GM12878 (cell line): ENCODE measurements at regions of chr12 and their contacts with region 1.

Region 1: GRCh38 chr12:76031537-76032073 is at the start of gene PHLDA1:
- DNase-seq: peak; percentile 79
- ATAC-seq: peak; percentile 84
- H3K4me3 ChIP-seq: peak within 1 kb of the TSS; percentile 85
- H3K27ac ChIP-seq: peak within 1 kb of the TSS; percentile 75
- H3K4me1 ChIP-seq: peaks cover 17% of the 10 kb centered on the region
- H3K27me3 ChIP-seq: no peaks in the 10 kb centered on the region; a peak in 1 of 4 replicates
- CTCF ChIP-seq: peak; percentile 57 to 89 (median 72)
- EP300 ChIP-seq: peak in 1 of 2 experiments; percentile 60; a peak in 1 of 4 replicates
- POLR2A ChIP-seq: peak; percentile 94
- RAD21 ChIP-seq: peak; percentile 81
- polyA plus RNA-seq, gene PHLDA1: 0.66 to 0.87 TPM

Region 2: GRCh38 chr12:75526655-75527511 is 504.7 kb before region 1 on chr12:
- CTCF ChIA-PET with region 1: interaction called, 144 read pairs
- POLR2A ChIA-PET with region 1: interaction called, 23 read pairs
- RAD21 ChIA-PET with region 1: interaction called, 144 read pairs
- SMC1A ChIA-PET with region 1: interaction called, 268 read pairs
- in situ Hi-C with region 1: loop called (anchors 5 kb)
- intact Hi-C with region 1: loop called (anchors 1 kb)
- DNase-seq: peak; percentile 54
- ATAC-seq: peak; percentile 98
- H3K4me3 ChIP-seq: no peak overlapping the region
- H3K27ac ChIP-seq: no peak overlapping the region
- H3K4me1 ChIP-seq: no peaks in the 10 kb centered on the region; the same call in 1 of the 2 replicates
- H3K27me3 ChIP-seq: no peaks in the 10 kb centered on the region
- CTCF ChIP-seq: peak; percentile 53 to 73 (median 62); a peak in 5 of 6 replicates
- EP300 ChIP-seq: peak; percentile 36 to 58; a peak in 1 of 4 replicates
- POLR2A ChIP-seq: no peak
- RAD21 ChIP-seq: peak; percentile 82

Region 3: DNA sequence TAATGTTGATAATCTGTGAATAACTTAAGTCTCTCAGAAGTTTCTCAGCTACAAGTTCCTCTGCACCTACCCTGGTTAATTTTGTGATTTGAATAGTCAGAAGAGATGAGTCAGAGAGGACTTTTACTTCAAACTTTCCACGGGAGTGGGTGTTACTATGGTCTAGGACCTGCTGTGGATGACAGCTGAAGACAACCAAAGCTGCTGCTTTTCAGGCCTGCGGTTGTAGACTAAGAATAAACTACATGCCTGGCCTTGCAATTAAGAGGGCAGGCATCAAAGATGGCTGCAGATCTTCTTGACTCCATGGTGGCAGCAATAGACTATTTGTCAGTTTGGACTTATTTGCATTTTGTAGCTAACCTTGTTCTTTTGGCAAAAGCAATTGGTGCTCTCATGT is 293.1 kb before region 1 on chr12:
- CTCF ChIA-PET with region 1: no interaction called
- POLR2A ChIA-PET with region 1: interaction called, 3 read pairs
- RAD21 ChIA-PET with region 1: interaction called, 14 read pairs
- SMC1A ChIA-PET with region 1: interaction called, 5 read pairs
- in situ Hi-C with region 1: no loop called
- intact Hi-C with region 1: no loop called
- DNase-seq: peak; percentile 16
- ATAC-seq: peak; percentile 96
- H3K4me3 ChIP-seq: no peak overlapping the region
- H3K27ac ChIP-seq: no peak overlapping the region
- H3K4me1 ChIP-seq: no peaks in the 10 kb centered on the region
- H3K27me3 ChIP-seq: no peaks in the 10 kb centered on the region
- CTCF ChIP-seq: no peak
- EP300 ChIP-seq: 0 out of 4 replicates have a peak, but pooled peaks have one; percentile 13 to 36
- POLR2A ChIP-seq: no peak
- RAD21 ChIP-seq: no peak

Region 4: GRCh38 chr12:75837700-75838099 is 193.9 kb before region 1 on chr12:
- CTCF ChIA-PET with region 1: interaction called, 3 read pairs
- POLR2A ChIA-PET with region 1: interaction called, 3 read pairs
- RAD21 ChIA-PET with region 1: interaction called, 3 read pairs
- SMC1A ChIA-PET with region 1: interaction called, 3 read pairs
- in situ Hi-C with region 1: no loop called
- intact Hi-C with region 1: loop called (anchors 5 kb)
- DNase-seq: no peak
- ATAC-seq: peak; percentile 26; the same call in 1 of the 3 replicates
- H3K4me3 ChIP-seq: no peak overlapping the region
- H3K27ac ChIP-seq: no peak overlapping the region
- H3K4me1 ChIP-seq: no peaks in the 10 kb centered on the region
- H3K27me3 ChIP-seq: no peaks in the 10 kb centered on the region
- CTCF ChIP-seq: no peak
- EP300 ChIP-seq: no peak
- POLR2A ChIP-seq: no peak
- RAD21 ChIP-seq: no peak

Region 5: GRCh38 chr12:75944097-75944904 is 87.3 kb before region 1 on chr12:
- CTCF ChIA-PET with region 1: interaction called, 5 read pairs
- POLR2A ChIA-PET with region 1: interaction called, 3 read pairs
- RAD21 ChIA-PET with region 1: interaction called, 6 read pairs
- SMC1A ChIA-PET with region 1: interaction called, 5 read pairs
- in situ Hi-C with region 1: no loop called
- intact Hi-C with region 1: loop called (anchors 2 kb)
- DNase-seq: peak; percentile 54
- ATAC-seq: peak; percentile 92
- H3K4me3 ChIP-seq: no peak overlapping the region
- H3K27ac ChIP-seq: peak overlapping the region; percentile 37
- H3K4me1 ChIP-seq: peaks cover 18% of the 10 kb centered on the region
- H3K27me3 ChIP-seq: no peaks in the 10 kb centered on the region
- CTCF ChIP-seq: no peak
- EP300 ChIP-seq: 0 out of 4 replicates have a peak, but pooled peaks of 1 of the 2 experiments have one; percentile 24
- POLR2A ChIP-seq: no peak
- RAD21 ChIP-seq: no peak

Region 6: DNA sequence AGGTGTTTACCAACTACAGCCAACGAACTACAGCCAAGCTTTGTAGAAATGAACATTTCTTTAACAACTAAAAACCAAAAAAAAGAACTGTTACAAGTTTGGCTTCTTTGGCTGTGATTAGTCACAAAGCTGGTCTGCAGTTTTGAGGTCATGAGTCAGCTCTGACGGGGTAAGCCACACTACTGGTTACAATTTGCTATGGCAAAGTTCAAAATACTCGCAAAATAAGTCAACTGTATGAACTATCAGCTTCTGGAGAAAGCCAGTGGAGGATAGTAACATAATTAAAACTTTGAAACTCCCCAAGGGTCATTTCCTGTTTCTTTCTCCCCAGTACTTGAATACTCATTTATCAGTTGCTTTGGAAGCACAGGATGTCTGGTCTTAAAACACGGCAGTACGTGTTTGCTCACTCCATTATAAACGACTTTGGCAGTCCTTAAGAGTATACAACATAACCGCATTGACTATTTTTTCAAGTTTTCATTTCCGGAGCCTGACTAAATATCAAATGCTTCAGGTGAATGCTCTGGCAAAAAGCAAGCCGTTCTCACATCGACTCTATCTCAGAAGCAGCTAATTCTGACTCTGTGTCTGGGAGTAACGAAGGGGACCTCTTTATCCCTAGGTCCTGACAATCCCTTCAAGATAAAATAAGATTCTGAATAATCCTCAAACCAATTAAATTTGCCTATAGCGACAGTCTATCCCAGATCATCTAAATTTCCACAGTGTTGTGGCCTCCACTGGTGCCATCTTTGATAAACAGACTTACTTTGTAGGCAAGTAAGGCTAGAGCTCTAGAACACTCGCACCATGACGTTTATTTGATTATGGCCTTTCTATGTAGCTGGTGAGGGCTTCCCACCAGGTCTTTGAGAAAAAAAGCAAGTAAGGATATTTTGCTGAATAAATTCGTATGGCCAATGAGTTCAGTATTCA is 10.6 kb before region 1 on chr12:
- CTCF ChIA-PET with region 1: interaction called, 9 read pairs
- POLR2A ChIA-PET with region 1: interaction called, 4 read pairs
- RAD21 ChIA-PET with region 1: interaction called, 16 read pairs
- SMC1A ChIA-PET with region 1: interaction called, 12 read pairs
- in situ Hi-C with region 1: no loop called
- intact Hi-C with region 1: no loop called
- DNase-seq: peak; percentile 19
- ATAC-seq: peak; percentile 76
- H3K4me3 ChIP-seq: no peak overlapping the region
- H3K27ac ChIP-seq: peak overlapping the region; percentile 18; the same call in 1 of the 2 replicates
- H3K4me1 ChIP-seq: peaks cover 14% of the 10 kb centered on the region
- H3K27me3 ChIP-seq: no peaks in the 10 kb centered on the region
- CTCF ChIP-seq: no peak
- EP300 ChIP-seq: no peak
- POLR2A ChIP-seq: no peak
- RAD21 ChIP-seq: no peak

Region 7: DNA sequence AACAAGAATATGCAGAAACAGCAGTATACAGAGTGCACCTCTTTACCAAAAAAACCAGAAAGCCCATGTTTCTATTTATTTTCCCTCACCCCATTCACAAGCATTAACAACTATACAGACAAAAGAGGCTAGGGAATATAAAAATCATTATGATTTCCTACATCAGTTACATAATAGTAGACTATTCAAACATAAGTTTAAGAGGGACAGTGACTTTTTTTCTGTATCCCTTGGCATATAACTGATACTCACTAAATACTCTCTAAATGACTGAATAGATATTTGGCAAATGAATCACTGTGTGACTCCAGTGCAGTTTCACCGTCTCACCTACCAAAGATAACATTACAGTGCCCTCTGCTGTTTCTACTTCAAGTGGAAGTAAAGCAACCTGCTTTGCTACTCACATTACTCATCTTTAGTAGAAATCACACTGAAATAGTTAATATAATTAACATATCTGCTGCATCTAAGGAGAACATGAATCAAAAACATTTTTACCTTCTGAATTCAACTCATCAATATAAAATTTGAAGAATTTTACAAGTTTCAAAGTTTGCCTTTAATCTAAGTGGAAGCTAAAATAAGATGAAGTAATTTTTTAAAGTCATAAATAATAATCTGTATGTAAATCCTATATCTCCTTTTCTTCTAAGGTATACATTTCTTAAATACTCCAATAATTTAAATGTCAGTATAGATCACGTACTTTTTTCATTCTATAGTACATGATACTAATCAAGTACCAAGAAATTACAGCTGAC is 424.2 kb after region 1 on chr12:
- CTCF ChIA-PET with region 1: interaction called, 5 read pairs
- POLR2A ChIA-PET with region 1: no interaction called
- RAD21 ChIA-PET with region 1: interaction called, 11 read pairs
- SMC1A ChIA-PET with region 1: interaction called, 11 read pairs
- in situ Hi-C with region 1: no loop called
- intact Hi-C with region 1: no loop called
- DNase-seq: peak; percentile 33
- ATAC-seq: peak; percentile 99
- H3K4me3 ChIP-seq: no peak overlapping the region
- H3K27ac ChIP-seq: no peak overlapping the region
- H3K4me1 ChIP-seq: no peaks in the 10 kb centered on the region
- H3K27me3 ChIP-seq: no peaks in the 10 kb centered on the region
- CTCF ChIP-seq: peak; percentile 54 to 73 (median 71); a peak in 5 of 6 replicates
- EP300 ChIP-seq: no peak
- POLR2A ChIP-seq: no peak
- RAD21 ChIP-seq: peak; percentile 89